ENCODE measurements at regions of chr6 and their contacts with region 1.

Region 1: GRCh38 chr6:26234421-26235296 is 130.3 kb upstream of the BTN3A2 start:
- DNase-seq: peak; percentile 55 to 88 (median 66)
- ATAC-seq: peak; percentile 63
- H3K4me3 ChIP-seq: peak overlapping the region; percentile 66 to 76
- H3K4me3 Mint-ChIP-seq: peak overlapping the region; percentile 85
- H3K27ac ChIP-seq: peak overlapping the region; percentile 84 to 92
- H3K27ac Mint-ChIP-seq: peak overlapping the region; percentile 93
- H3K4me1 ChIP-seq: peaks cover 14% of the 10 kb centered on the region
- H3K4me1 Mint-ChIP-seq: peaks cover 31% of the 10 kb centered on the region
- H3K27me3 ChIP-seq: no peaks in the 10 kb centered on the region
- H3K27me3 Mint-ChIP-seq: no peaks in the 10 kb centered on the region
- CTCF ChIP-seq: no peak

Region 2: DNA sequence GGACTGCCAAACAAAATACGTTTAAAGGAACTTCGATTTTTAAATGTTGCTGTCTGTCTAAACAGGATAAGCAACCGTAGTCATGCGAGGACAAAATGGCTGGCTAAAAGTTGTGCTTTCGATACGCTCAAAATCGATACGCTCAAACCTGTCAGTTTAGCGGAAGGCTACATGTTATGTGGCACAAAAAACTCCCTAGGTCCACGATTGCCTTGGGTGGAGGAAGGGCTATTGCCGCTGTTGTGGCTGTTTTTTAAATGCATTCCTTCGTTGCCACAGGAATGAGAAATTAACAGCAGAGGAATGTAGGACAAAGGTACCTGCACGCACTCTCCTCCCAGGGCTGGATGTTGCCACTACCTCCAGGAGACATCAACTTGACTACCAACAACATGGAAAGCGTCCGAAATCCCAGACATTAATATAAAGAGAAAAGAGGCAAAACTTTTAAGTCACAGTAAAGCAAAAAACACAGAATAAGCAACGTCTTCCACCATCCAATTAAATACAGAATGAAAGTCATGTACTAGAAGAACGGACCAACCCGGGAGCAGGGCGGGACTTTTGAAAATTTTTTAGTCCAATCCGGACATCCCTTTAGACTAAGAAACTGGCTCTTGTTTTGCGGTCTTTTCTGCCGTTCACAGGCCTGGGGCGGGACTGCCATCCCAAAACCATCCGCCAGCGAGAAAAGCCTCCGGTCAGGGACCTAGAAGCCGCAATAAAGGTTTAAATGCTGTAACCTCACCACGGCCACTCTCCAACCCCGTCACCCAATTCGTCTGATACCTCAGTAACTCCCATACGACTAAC is 179.6 kb before region 1 on chr6:
- CTCF ChIA-PET with region 1: no interaction called
- POLR2A ChIA-PET with region 1: interaction called, 11 read pairs
- intact Hi-C with region 1: no loop called
- DNase-seq: peak; percentile 71 to 94 (median 88)
- ATAC-seq: peak; percentile 72
- H3K4me3 ChIP-seq: peak overlapping the region; percentile 75 to 85
- H3K4me3 Mint-ChIP-seq: peak overlapping the region; percentile 96
- H3K27ac ChIP-seq: peak overlapping the region; percentile 85 to 96
- H3K27ac Mint-ChIP-seq: peak overlapping the region; percentile 99
- H3K4me1 ChIP-seq: peaks cover 17% of the 10 kb centered on the region
- H3K4me1 Mint-ChIP-seq: peaks cover 23% of the 10 kb centered on the region
- H3K27me3 ChIP-seq: no peaks in the 10 kb centered on the region
- H3K27me3 Mint-ChIP-seq: no peaks in the 10 kb centered on the region
- CTCF ChIP-seq: no peak

Region 3: DNA sequence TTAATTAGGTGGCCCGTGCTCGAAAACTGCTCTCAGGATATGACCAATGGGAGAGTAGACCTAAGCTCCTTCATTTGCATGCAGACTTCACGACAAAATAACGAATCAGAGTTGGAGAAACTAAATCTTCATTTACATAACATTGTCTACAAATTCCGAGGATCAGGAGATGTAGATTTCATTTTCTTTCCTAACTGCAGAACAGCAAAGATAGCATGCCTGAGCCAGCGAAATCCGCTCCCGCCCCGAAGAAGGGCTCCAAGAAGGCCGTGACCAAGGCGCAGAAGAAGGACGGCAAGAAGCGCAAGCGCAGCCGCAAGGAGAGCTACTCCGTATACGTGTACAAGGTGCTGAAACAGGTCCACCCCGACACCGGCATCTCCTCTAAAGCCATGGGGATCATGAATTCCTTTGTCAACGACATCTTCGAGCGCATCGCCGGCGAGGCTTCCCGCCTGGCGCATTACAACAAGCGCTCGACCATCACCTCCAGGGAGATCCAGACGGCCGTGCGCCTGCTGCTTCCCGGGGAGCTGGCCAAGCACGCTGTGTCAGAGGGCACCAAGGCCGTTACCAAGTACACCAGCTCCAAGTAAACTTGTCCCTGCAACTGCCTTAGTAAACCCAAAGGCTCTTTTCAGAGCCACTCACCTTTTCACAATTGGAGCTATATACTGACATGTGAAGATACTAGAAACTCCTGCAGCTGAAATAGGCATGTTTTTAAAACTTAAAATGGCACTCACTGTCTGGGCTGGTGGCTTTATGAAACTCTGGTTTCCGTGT is 50.9 kb before region 1 on chr6:
- CTCF ChIA-PET with region 1: interaction called, 3 read pairs
- POLR2A ChIA-PET with region 1: interaction called, 51 read pairs
- intact Hi-C with region 1: loop called in 1 of 2 experiments (anchors 10 kb)
- DNase-seq: peak in 7 of 9 experiments; percentile 33 to 90 (median 59)
- ATAC-seq: peak; percentile 88
- H3K4me3 ChIP-seq: peak overlapping the region; percentile 60 to 71
- H3K4me3 Mint-ChIP-seq: peak overlapping the region; percentile 100
- H3K27ac ChIP-seq: peak overlapping the region; percentile 61 to 76
- H3K27ac Mint-ChIP-seq: peak overlapping the region; percentile 99
- H3K4me1 ChIP-seq: peaks cover 20% of the 10 kb centered on the region
- H3K4me1 Mint-ChIP-seq: peaks cover 42% of the 10 kb centered on the region
- H3K27me3 ChIP-seq: no peaks in the 10 kb centered on the region
- H3K27me3 Mint-ChIP-seq: no peaks in the 10 kb centered on the region
- CTCF ChIP-seq: no peak

Region 4: GRCh38 chr6:26223650-26224546 is 10.8 kb before region 1 on chr6:
- CTCF ChIA-PET with region 1: interaction called, 22 read pairs
- POLR2A ChIA-PET with region 1: interaction called, 192 read pairs
- intact Hi-C with region 1: loop called in 1 of 2 experiments (anchors 1 kb)
- DNase-seq: peak in 8 of 9 experiments; percentile 42 to 90 (median 72)
- ATAC-seq: peak; percentile 85
- H3K4me3 ChIP-seq: peak overlapping the region; percentile 64 to 72
- H3K4me3 Mint-ChIP-seq: no peak overlapping the region
- H3K27ac ChIP-seq: peak overlapping the region; percentile 76 to 87
- H3K27ac Mint-ChIP-seq: no peak overlapping the region
- H3K4me1 ChIP-seq: peaks cover 20% of the 10 kb centered on the region
- H3K4me1 Mint-ChIP-seq: peaks cover 24% of the 10 kb centered on the region
- H3K27me3 ChIP-seq: no peaks in the 10 kb centered on the region
- H3K27me3 Mint-ChIP-seq: no peaks in the 10 kb centered on the region
- CTCF ChIP-seq: no peak

Measured in CD8-positive, alpha-beta T cell (primary cell).